ENCODE measurements at regions of chr12 and their contacts with region 1.

Region 1: DNA sequence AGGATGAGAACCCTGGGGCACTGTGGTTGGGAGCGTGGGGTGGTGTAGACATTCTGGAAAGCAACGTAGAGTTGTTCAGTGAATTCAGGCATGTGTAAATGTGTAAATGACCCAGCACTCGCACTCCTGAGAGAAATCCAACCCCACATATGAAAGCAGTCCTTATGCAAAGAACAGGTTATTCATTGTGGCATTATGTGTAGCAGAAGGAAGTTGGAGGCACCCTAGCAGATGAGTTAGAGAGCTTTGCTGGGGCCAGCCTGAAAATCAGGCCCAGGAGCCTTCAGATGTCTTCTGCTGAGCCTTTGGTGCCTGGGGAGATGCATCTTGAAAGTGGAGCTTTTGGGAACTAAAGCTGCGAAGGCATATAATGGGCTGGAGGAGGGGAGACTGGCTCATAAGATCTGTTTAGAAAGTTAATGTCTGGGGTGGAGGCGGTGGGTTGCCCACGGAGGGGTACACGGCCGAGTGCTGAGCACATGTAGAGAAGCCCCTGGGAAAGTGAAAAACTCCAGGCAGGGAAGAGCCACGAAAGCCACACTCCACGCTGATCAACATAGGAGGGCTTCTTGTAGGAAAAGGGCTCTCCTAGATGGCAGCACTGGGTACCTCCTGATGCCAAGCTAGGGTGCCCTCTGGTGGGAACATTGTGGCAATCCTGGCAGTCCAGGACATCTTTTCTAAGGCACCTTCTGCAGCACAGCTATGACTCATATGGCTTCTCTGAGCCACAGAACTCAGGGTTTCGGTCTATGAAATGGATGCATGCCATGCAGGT is 6.0 kb upstream of the KRT83 start:
- DNase-seq: peak; percentile 91
- ATAC-seq: peak; percentile 98
- H3K4me3 ChIP-seq: no peak overlapping the region
- H3K27ac ChIP-seq: no peak overlapping the region
- H3K4me1 ChIP-seq: no peaks in the 10 kb centered on the region
- H3K27me3 ChIP-seq: peaks cover 55% of the 10 kb centered on the region
- CTCF ChIP-seq: peak; percentile 99; the same call in 1 of the 2 replicates
- POLR2A ChIP-seq: no peak
- RAD21 ChIP-seq: peak; percentile 96

Region 2: GRCh38 chr12:52213512-52214420 is 113.5 kb before region 1 on chr12:
- CTCF ChIA-PET with region 1: no interaction called
- POLR2A ChIA-PET with region 1: no interaction called
- dilution Hi-C with region 1: no loop called
- in situ Hi-C with region 1: no loop called
- intact Hi-C with region 1: loop called (anchors 2 kb)
- DNase-seq: peak; percentile 78
- ATAC-seq: peak; percentile 98
- H3K4me3 ChIP-seq: no peak overlapping the region
- H3K27ac ChIP-seq: no peak overlapping the region
- H3K4me1 ChIP-seq: peaks cover 9% of the 10 kb centered on the region
- H3K27me3 ChIP-seq: no peaks in the 10 kb centered on the region
- CTCF ChIP-seq: peak; percentile 100
- POLR2A ChIP-seq: no peak
- RAD21 ChIP-seq: peak; percentile 100

Region 3: GRCh38 chr12:52221912-52222457 is 105.3 kb before region 1 on chr12:
- CTCF ChIA-PET with region 1: interaction called, 8 read pairs
- POLR2A ChIA-PET with region 1: no interaction called
- dilution Hi-C with region 1: no loop called
- in situ Hi-C with region 1: no loop called
- intact Hi-C with region 1: loop called (anchors 1 kb)
- DNase-seq: peak; percentile 25
- ATAC-seq: peak; percentile 37
- H3K4me3 ChIP-seq: no peak overlapping the region
- H3K27ac ChIP-seq: no peak overlapping the region
- H3K4me1 ChIP-seq: peaks cover 9% of the 10 kb centered on the region; the same call in 1 of the 2 replicates
- H3K27me3 ChIP-seq: no peaks in the 10 kb centered on the region
- CTCF ChIP-seq: peak; percentile 50
- POLR2A ChIP-seq: no peak
- RAD21 ChIP-seq: peak; percentile 33

Region 4: DNA sequence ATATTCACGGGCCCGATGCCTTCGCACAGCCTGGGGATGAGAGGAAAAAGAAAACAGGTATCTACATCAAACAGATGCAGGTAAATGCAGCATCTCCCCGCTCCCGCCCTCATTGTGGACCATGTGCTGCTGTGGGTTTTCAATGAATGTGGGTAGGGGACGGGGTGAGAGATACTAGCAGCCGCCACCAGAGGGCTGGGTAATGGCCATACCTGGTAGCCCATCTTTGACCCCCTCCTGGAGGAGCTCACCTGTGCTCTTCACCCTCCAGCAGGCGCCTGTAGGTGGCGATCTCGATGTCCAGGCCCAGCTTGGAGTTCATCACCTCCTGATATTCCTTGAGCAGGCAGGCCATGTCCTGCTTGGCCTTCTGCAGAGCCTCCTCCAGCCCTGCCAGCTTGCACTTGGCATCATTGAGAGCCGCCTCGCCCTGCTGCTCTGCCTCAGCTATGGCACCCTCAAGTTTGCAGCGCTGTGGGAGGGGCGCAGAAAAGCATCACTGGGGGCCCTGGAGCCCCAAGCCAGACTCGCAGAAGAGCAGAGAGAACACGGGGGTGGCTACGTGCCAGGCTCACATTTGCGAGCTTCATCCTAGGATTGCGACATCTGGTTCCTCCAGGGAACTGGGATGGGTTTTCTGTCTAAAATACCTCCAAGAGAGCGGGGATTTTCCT is 68.7 kb after region 1 on chr12:
- CTCF ChIA-PET with region 1: no interaction called
- POLR2A ChIA-PET with region 1: no interaction called
- dilution Hi-C with region 1: no loop called
- in situ Hi-C with region 1: no loop called
- intact Hi-C with region 1: no loop called
- DNase-seq: no peak
- ATAC-seq: no peak
- H3K4me3 ChIP-seq: no peak overlapping the region
- H3K27ac ChIP-seq: no peak overlapping the region
- H3K4me1 ChIP-seq: no peaks in the 10 kb centered on the region
- H3K27me3 ChIP-seq: peaks cover 39% of the 10 kb centered on the region
- CTCF ChIP-seq: no peak
- POLR2A ChIP-seq: no peak
- RAD21 ChIP-seq: no peak